Activated naive CD4-positive, alpha-beta T cell treated with anti-CD3 and anti-CD28 coated beads, Interleukin-2, amount 10 ng/mL, durations not matched to agents 7 days and 5 days (primary cell): ENCODE measurements at regions of chr3 and their contacts with region 1.

Region 1: DNA sequence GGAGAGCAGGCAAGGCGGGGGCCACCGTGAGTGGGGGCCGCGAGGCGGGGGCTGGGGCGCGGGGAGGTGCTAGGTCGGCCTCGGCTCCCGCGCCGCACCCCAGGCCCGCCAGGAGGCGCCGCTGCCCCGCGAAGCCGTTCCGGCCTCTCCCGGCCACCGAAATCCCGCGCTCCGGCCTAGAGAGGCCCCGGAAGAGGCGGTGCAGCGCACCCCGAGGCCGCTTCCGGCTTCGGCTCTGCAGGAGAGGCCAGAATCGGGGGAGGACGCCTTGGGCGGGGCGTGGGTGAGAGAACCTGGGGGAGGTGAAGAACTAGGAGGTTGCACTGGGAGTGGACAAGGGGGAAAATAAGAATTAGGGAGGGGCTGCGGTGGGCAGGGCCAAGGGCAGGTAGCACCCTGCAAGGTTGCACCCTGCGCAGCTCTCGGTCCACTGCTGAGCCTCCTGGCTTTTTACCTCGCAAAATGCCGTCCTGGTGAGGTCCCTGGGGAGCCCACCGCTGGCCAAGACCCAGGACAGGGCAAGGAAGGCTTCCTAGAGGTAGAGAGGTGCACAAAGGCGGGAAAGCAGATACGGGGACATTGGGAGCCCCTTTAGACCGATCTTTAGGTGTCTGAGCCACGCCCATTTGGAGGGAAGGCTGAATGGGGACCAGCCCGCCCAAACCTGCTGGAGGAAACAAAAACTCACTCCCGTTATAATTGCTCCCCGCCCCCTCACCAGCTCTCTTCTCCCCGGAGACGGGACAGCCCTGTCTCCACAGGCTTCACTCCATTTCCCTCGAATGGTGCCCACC is 8.4 kb upstream of the GNAI2 start:
- DNase-seq: peak; percentile 94
- H3K4me3 Mint-ChIP-seq: peak overlapping the region; percentile 90
- H3K27ac Mint-ChIP-seq: peak overlapping the region; percentile 91
- H3K4me1 Mint-ChIP-seq: peaks cover 42% of the 10 kb centered on the region
- H3K27me3 Mint-ChIP-seq: peaks cover 25% of the 10 kb centered on the region

Region 2: DNA sequence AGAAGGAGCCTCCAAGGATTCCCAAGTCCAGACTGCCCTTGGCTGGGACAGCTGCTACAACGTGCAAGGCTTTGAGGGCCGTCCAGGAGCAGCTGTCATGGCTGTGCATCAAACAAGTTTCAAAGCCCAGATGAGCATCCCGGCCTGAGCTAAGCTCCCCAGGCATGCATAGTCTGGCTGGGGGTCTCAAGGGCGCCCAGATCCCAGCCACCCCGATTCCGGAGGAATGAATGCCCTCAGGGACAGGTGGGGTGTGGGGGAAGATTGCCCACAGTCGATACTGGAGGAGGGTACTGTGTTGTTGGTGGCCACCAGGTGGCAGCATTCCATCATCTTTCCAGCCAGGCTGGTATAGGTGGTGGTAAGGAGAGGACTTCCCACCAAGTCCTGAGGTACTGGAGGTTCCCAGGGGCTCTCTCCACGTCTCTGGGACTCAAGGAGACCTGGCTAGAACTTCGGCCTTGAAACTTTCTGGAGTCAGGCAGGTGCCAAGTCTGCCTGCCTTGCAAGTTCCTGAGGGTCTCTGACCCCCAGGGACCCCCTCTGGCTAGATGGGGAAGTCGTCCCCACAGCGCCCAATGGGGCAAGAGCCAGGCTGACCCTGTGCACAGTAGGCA is 106.1 kb before region 1 on chr3:
- CTCF ChIA-PET with region 1: interaction called, 11 read pairs
- DNase-seq: peak; percentile 82
- H3K4me3 Mint-ChIP-seq: no peak overlapping the region
- H3K27ac Mint-ChIP-seq: no peak overlapping the region
- H3K4me1 Mint-ChIP-seq: no peaks in the 10 kb centered on the region
- H3K27me3 Mint-ChIP-seq: no peaks in the 10 kb centered on the region

Region 3: DNA sequence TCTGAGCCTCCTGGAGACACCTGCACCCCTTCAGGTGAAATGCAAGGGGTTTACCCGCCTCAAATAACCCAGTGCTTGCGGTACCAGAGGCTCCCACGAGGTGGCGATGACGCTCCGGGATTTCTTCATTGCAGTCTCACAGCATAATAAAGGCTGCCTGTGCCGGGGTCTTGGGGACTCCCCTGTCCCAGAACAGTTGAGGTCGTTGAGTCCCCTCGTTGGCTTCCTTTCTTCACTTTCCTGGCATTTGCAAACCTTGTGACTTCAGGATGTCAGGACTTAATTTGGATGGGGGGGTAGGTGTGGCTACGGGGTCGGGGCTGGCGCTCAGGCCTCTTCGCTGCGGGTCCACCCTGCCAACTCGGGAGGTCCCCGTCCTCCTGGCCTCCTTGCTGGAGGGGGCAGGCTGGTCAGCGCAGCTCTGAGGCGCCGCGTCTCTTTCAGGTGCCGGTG is 34.9 kb before region 1 on chr3:
- CTCF ChIA-PET with region 1: interaction called, 202 read pairs
- DNase-seq: peak; percentile 90
- H3K4me3 Mint-ChIP-seq: no peak overlapping the region
- H3K27ac Mint-ChIP-seq: peak overlapping the region; percentile 65
- H3K4me1 Mint-ChIP-seq: peaks cover 13% of the 10 kb centered on the region
- H3K27me3 Mint-ChIP-seq: peaks cover 68% of the 10 kb centered on the region

Region 4: DNA sequence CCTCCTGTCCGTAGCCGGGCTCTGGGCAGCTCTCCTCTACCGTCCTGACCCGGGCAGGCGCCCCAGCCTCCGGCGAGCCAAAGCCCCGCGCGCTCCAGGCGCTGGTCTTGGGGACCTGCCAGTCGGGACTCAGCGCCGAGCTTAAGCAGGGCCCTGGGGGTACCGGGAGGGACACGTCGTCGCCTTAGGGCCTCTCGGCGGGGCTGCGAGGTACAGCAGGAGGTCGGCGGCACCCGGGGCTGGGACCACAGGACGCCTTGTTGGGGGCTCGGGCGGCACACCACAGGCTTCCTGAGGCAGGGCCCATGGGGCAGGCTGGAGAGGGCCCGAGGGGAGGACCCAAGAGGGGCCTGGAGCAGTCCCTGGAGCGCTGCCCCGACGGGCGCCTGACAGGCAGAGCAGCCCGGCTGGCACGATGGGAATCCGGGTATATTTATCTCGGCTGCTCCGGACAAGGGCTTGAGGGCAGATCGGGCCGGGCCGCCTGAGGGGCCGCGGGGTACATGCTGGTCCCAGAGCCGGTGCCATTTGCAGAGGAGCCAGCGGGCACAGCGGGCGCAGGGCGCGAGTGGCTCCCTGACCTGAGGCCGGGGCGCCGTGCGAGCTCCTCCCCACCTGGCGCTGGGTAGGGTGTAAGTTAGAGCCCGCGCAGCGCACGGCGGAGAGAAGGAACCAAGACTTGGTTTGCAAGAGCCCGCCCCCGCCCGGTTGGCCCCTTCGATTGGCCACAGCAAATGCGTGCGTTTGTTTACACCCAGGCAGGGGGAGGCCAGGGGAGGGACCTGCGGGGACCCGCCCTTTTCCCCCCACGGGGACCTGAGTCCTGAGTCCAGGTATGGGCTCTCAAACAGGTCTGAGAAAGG is 21.9 kb before region 1 on chr3:
- CTCF ChIA-PET with region 1: interaction called, 11 read pairs
- DNase-seq: peak; percentile 62
- H3K4me3 Mint-ChIP-seq: no peak overlapping the region
- H3K27ac Mint-ChIP-seq: no peak overlapping the region
- H3K4me1 Mint-ChIP-seq: peaks cover 2% of the 10 kb centered on the region
- H3K27me3 Mint-ChIP-seq: peaks cover 92% of the 10 kb centered on the region

Region 5: DNA sequence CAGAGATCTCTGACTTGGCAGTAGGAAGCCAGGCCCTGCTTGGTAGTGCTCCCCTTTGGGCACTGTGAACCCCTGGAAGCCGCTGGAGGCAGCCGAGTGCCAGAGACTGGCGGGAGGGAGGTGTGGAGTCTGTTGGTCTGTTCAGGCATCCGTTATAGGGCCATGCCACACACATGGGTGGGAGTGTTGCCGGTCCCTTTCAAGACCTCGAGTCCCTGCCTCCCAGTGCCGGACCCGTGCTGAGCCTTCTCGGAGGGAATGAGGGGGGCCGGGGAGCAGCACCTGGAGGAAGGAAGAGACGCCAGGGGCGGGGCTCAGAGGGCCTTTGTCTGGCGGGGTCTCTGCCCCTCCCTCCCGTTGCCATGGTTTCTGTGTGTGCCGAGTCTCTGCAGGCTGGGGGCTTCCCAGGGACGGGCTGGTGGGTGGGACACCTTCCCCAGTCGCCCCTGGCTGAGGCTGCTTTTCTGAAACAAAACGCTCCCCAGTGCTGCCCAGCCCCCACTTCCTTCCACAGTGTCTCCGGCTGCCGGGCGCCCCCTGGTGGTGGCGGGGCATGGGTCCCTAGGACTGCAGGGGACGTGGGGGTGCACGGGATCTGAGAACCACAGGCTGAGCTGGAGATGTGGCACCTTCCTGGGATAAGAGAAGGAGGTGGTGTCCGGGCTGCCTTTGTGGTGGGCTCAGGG is 18.4 kb after region 1 on chr3:
- CTCF ChIA-PET with region 1: interaction called, 112 read pairs
- DNase-seq: peak; percentile 95
- H3K4me3 Mint-ChIP-seq: peak overlapping the region; percentile 73
- H3K27ac Mint-ChIP-seq: peak overlapping the region; percentile 93
- H3K4me1 Mint-ChIP-seq: peaks cover 81% of the 10 kb centered on the region
- H3K27me3 Mint-ChIP-seq: no peaks in the 10 kb centered on the region

Region 6: GRCh38 chr3:50260027-50260941 is 32.7 kb after region 1 on chr3:
- CTCF ChIA-PET with region 1: interaction called, 23 read pairs
- DNase-seq: peak; percentile 89
- H3K4me3 Mint-ChIP-seq: peak overlapping the region; percentile 66
- H3K27ac Mint-ChIP-seq: peak overlapping the region; percentile 55
- H3K4me1 Mint-ChIP-seq: peaks cover 10% of the 10 kb centered on the region
- H3K27me3 Mint-ChIP-seq: peaks cover 14% of the 10 kb centered on the region

Region 7: GRCh38 chr3:50272911-50273693 is 45.5 kb after region 1 on chr3:
- CTCF ChIA-PET with region 1: interaction called, 24 read pairs
- DNase-seq: peak; percentile 91
- H3K4me3 Mint-ChIP-seq: peak overlapping the region; percentile 57
- H3K27ac Mint-ChIP-seq: peak overlapping the region; percentile 15
- H3K4me1 Mint-ChIP-seq: peaks cover 31% of the 10 kb centered on the region
- H3K27me3 Mint-ChIP-seq: peaks cover 88% of the 10 kb centered on the region

Region 8: GRCh38 chr3:50298836-50299637 is 71.5 kb after region 1 on chr3 and contains the starts of genes HYAL3 and NAA80:
- CTCF ChIA-PET with region 1: no interaction called
- DNase-seq: peak; percentile 100
- H3K4me3 Mint-ChIP-seq: peak within 1 kb of the TSS; percentile 98
- H3K27ac Mint-ChIP-seq: peak within 1 kb of the TSS; percentile 99
- H3K4me1 Mint-ChIP-seq: peaks cover 40% of the 10 kb centered on the region
- H3K27me3 Mint-ChIP-seq: no peaks in the 10 kb centered on the region